Caco-2 (cell line): ENCODE measurements at regions of chr5 and their contacts with region 1.

Region 1: DNA sequence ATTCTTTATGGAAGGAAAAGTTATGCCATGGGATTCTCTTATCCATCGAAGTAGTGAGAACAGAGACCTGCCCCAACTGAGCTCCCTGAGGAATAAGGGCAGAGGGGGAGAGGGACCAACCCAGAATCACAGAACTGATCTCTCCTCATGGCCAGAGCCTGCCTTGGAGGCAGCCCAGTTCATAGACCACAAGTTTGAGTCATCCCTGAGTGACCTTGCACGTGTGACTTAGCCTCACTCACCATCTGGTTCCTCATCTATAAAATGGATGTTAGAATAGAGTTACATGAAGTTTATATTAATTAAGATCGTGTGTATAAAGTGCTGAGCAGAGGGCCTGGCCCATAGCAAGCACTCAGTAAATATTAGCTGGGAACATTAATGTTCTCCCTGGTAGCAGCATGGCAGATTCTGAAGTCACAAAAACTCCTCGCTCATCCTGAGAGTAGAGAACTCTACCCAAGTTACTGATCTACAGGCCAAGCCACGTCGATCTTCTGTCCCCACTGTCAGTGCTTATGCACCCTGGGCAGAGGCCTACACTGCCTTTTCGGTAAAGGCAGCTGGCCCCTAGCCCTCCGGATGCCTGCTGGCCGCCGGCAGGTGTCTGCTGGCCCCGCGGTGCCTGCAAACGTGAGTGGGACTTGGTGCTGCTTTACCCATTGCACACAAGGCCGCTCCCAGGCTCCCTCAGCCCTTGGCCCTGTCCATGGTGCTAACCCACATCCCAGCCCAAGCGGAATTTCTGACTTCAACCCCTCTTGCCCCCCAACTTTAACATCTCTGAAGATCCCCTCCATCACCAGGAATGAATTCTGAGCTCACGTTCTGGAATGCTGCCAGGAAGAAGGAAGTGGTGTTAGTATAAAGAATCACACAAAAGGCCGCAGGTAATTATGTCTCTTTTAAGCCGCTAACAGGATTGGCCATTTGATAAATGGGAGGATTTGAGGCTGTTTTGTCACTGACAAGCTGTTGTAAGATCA is 61.1 kb upstream of the ARAP3 start:
- DNase-seq: peak; percentile 47 to 71
- H3K4me3 ChIP-seq: no peak overlapping the region
- H3K4me3 Mint-ChIP-seq: no peak overlapping the region
- H3K27ac Mint-ChIP-seq: no peak overlapping the region
- H3K4me1 ChIP-seq: peaks cover 6% of the 10 kb centered on the region; the same call in 1 of the 2 replicates
- H3K4me1 Mint-ChIP-seq: no peaks in the 10 kb centered on the region
- H3K27me3 ChIP-seq: no peaks in the 10 kb centered on the region
- H3K27me3 Mint-ChIP-seq: peaks cover 15% of the 10 kb centered on the region
- CTCF ChIP-seq: no peak

Region 2: GRCh38 chr5:141757402-141757801 is 14.2 kb after region 1 on chr5:
- CTCF ChIA-PET with region 1: no interaction called
- POLR2A ChIA-PET with region 1: no interaction called
- intact Hi-C with region 1: loop called (anchors 1 kb)
- DNase-seq: peak; percentile 58 to 63
- H3K4me3 ChIP-seq: no peak overlapping the region
- H3K4me3 Mint-ChIP-seq: no peak overlapping the region
- H3K27ac Mint-ChIP-seq: peak overlapping the region; percentile 2
- H3K4me1 ChIP-seq: peaks cover 7% of the 10 kb centered on the region
- H3K4me1 Mint-ChIP-seq: peaks cover 20% of the 10 kb centered on the region
- H3K27me3 ChIP-seq: no peaks in the 10 kb centered on the region
- H3K27me3 Mint-ChIP-seq: peaks cover 9% of the 10 kb centered on the region
- CTCF ChIP-seq: peak; percentile 20 to 50